K562 (cell line): ENCODE measurements at regions of chr13 and their contacts with region 1.

Region 1: GRCh38 chr13:91693466-91693865 is 295.0 kb downstream of the GPC5 start:
- DNase-seq: no peak
- ATAC-seq: no peak
- H3K4me3 ChIP-seq: no peak overlapping the region
- H3K27ac ChIP-seq: no peak overlapping the region
- H3K4me1 ChIP-seq: no peaks in the 10 kb centered on the region
- H3K27me3 ChIP-seq: no peaks in the 10 kb centered on the region
- CTCF ChIP-seq: no peak
- EP300 ChIP-seq: no peak
- POLR2A ChIP-seq: no peak
- RAD21 ChIP-seq: no peak

Region 2: GRCh38 chr13:90565985-90566713 is 1127.3 kb before region 1 on chr13:
- CTCF ChIA-PET with region 1: no interaction called
- POLR2A ChIA-PET with region 1: no interaction called
- in situ Hi-C with region 1: no loop called
- intact Hi-C with region 1: no loop called
- DNase-seq: no peak
- ATAC-seq: no peak
- H3K4me3 ChIP-seq: no peak overlapping the region
- H3K27ac ChIP-seq: no peak overlapping the region
- H3K4me1 ChIP-seq: no peaks in the 10 kb centered on the region; a peak in 1 of 5 replicates
- H3K27me3 ChIP-seq: no peaks in the 10 kb centered on the region
- CTCF ChIP-seq: no peak
- EP300 ChIP-seq: no peak
- POLR2A ChIP-seq: no peak
- RAD21 ChIP-seq: no peak

Region 3: GRCh38 chr13:91722267-91722884 is 28.9 kb after region 1 on chr13:
- CTCF ChIA-PET with region 1: no interaction called
- POLR2A ChIA-PET with region 1: no interaction called
- in situ Hi-C with region 1: no loop called
- intact Hi-C with region 1: no loop called
- DNase-seq: peak; percentile 57 to 67 (median 63)
- ATAC-seq: peak; percentile 48; the same call in 2 of the 3 replicates
- H3K4me3 ChIP-seq: no peak overlapping the region
- H3K27ac ChIP-seq: no peak overlapping the region
- H3K4me1 ChIP-seq: no peaks in the 10 kb centered on the region
- H3K27me3 ChIP-seq: no peaks in the 10 kb centered on the region
- CTCF ChIP-seq: peak in 2 of 3 experiments; percentile 67 to 86; a peak in 4 of 6 replicates
- EP300 ChIP-seq: no peak
- POLR2A ChIP-seq: no peak
- RAD21 ChIP-seq: peak; percentile 80 to 88

Region 4: GRCh38 chr13:91805605-91806004 is 112.1 kb after region 1 on chr13:
- CTCF ChIA-PET with region 1: no interaction called
- POLR2A ChIA-PET with region 1: no interaction called
- in situ Hi-C with region 1: no loop called
- intact Hi-C with region 1: loop called (anchors 5 kb)
- DNase-seq: no peak
- ATAC-seq: 0 out of 3 replicates have a peak, but pooled peaks have one; percentile 32
- H3K4me3 ChIP-seq: no peak overlapping the region
- H3K27ac ChIP-seq: no peak overlapping the region
- H3K4me1 ChIP-seq: no peaks in the 10 kb centered on the region
- H3K27me3 ChIP-seq: no peaks in the 10 kb centered on the region
- CTCF ChIP-seq: peak in 1 of 3 experiments; percentile 23; a peak in 1 of 6 replicates
- EP300 ChIP-seq: no peak
- POLR2A ChIP-seq: no peak
- RAD21 ChIP-seq: peak in 1 of 2 experiments; percentile 16; a peak in 2 of 4 replicates